ENCODE measurements at regions of chr12 and their contacts with region 1.

Region 1: DNA sequence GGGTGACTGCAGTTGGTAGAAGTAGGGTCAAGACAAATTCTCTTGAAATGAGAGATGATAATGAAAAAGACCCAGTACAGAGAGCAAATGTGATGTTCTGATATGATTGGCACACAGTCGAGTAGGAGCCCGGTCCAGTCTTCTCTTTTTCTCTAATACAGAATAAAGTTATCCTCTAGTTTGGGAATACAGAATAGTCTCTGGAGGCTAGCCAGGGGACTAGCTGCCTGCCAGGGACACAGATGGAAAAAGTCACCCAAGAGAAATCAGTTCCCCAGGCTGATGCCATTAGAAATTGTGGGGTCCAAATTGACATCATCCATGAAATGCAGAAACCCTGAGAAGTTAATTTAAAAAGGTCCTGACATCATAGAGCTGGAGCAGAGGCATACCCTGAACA is 177.2 kb upstream of the NEDD1 start:
- DNase-seq: no peak
- H3K4me3 ChIP-seq: no peak overlapping the region
- H3K27ac ChIP-seq: no peak overlapping the region
- H3K4me1 ChIP-seq: no peaks in the 10 kb centered on the region
- H3K27me3 ChIP-seq: no peaks in the 10 kb centered on the region
- CTCF ChIP-seq: no peak
- EP300 ChIP-seq: no peak
- POLR2A ChIP-seq: no peak
- RAD21 ChIP-seq: no peak

Region 2: GRCh38 chr12:96719660-96720363 is 10.1 kb before region 1 on chr12:
- CTCF ChIA-PET with region 1: interaction called, 11 read pairs
- POLR2A ChIA-PET with region 1: no interaction called
- DNase-seq: no peak
- H3K4me3 ChIP-seq: no peak overlapping the region
- H3K27ac ChIP-seq: no peak overlapping the region
- H3K4me1 ChIP-seq: peaks cover 0 to 4% (median 0%) of the 10 kb centered on the region in 4 experiments; a peak in 2 of 7 replicates
- H3K27me3 ChIP-seq: no peaks in the 10 kb centered on the region
- CTCF ChIP-seq: no peak
- EP300 ChIP-seq: no peak
- POLR2A ChIP-seq: no peak
- RAD21 ChIP-seq: no peak

Region 3: DNA sequence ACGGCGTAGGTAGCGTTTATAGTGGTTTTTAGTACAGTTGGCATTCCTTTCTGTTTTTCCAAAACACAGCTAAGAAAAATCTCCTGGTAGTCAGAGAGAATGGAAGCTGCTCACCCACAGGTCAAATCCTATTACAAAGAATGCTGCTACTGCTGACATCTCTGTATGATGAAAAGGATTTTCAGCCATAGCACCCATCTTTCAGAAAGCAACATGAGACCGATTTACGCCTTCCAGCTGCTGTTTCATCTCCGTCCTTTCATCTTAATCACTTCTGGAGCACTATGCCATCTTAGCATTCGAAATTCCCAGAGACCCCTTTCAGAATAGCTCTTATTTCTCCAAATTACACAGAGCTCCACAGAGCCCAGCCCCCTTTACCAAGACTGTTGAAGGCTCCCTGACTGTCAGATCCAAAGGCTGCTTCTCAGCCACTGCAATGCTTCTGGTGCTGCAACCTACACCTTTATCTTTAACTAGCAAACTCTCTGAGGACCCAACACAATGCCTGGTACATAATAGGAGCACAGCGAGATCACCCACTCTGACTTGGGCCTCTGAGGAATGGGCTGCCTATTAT is 389.0 kb after region 1 on chr12:
- CTCF ChIA-PET with region 1: no interaction called
- POLR2A ChIA-PET with region 1: no interaction called
- DNase-seq: no peak
- H3K4me3 ChIP-seq: no peak overlapping the region
- H3K27ac ChIP-seq: no peak overlapping the region
- H3K4me1 ChIP-seq: peaks cover 0 to 2% (median under 1%) of the 10 kb centered on the region in 4 experiments; a peak in 1 of 7 replicates
- H3K27me3 ChIP-seq: no peaks in the 10 kb centered on the region
- CTCF ChIP-seq: no peak
- EP300 ChIP-seq: no peak
- POLR2A ChIP-seq: no peak
- RAD21 ChIP-seq: no peak